ENCODE measurements at regions of chr16 and their contacts with region 1.

Region 1: GRCh38 chr16:24504472-24505345 is 34.7 kb upstream of the RBBP6 start:
- DNase-seq: peak; percentile 71
- CTCF ChIP-seq: peak; percentile 72

Region 2: DNA sequence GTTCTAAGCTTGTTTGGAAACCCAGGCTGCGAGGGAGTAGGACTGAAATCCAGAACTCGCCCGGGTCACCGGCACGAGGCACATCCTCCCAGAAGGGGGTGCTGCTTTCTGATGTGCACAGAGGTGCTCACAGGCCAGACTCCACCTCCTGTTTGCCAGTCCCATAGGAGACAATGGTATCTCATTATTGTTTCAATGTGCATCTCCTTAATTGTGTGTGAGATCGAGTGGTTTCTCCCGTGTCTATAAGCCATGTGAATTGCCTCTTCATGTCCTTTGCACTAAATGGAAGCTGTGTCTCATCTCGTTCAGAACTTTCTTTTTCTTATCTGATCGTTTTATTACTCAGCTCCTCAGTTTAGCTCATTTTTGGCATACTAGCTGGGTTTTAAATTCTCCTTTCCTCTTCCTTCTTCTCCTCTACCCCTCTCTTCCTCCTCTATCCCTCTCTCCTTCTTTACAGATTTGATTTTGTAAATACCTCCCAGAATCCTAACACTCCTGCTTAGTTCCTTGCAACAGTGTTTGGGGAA is 701.1 kb before region 1 on chr16:
- CTCF ChIA-PET with region 1: interaction called, 19 read pairs
- POLR2A ChIA-PET with region 1: no interaction called
- DNase-seq: peak; percentile 82
- CTCF ChIP-seq: peak; percentile 85

Region 3: GRCh38 chr16:24070851-24071250 is 433.9 kb before region 1 on chr16:
- CTCF ChIA-PET with region 1: interaction called, 10 read pairs
- POLR2A ChIA-PET with region 1: no interaction called
- DNase-seq: peak; percentile 65
- CTCF ChIP-seq: peak; percentile 39

Region 4: GRCh38 chr16:24493859-24494258 is 10.8 kb before region 1 on chr16:
- CTCF ChIA-PET with region 1: interaction called, 24 read pairs
- POLR2A ChIA-PET with region 1: no interaction called
- DNase-seq: no peak
- CTCF ChIP-seq: no peak